ENCODE measurements at regions of chr14 and their contacts with region 1.

Region 1: GRCh38 chr14:68824517-68825347 is 31.9 kb upstream of the ZFP36L1 start:
- DNase-seq: peak; percentile 86
- H3K4me3 ChIP-seq: no peak overlapping the region
- H3K27ac ChIP-seq: no peak overlapping the region
- H3K4me1 ChIP-seq: peaks cover 0 to 5% of the 10 kb centered on the region in 2 experiments; a peak in 1 of 4 replicates
- H3K27me3 ChIP-seq: no peaks in the 10 kb centered on the region
- CTCF ChIP-seq: peak; percentile 82
- EP300 ChIP-seq: no peak
- RAD21 ChIP-seq: peak; percentile 66

Region 2: GRCh38 chr14:67943947-67944346 is 880.8 kb before region 1 on chr14:
- CTCF ChIA-PET with region 1: interaction called, 42 read pairs
- POLR2A ChIA-PET with region 1: no interaction called
- DNase-seq: peak; percentile 57
- H3K4me3 ChIP-seq: no peak overlapping the region
- H3K27ac ChIP-seq: peak overlapping the region; percentile 54 to 83; a peak in 3 of 4 replicates
- H3K4me1 ChIP-seq: peaks cover 0 to 28% of the 10 kb centered on the region in 2 experiments; a peak in 3 of 4 replicates
- H3K27me3 ChIP-seq: no peaks in the 10 kb centered on the region
- CTCF ChIP-seq: peak; percentile 82
- EP300 ChIP-seq: peak in 1 of 2 experiments; percentile 42; a peak in 1 of 4 replicates
- RAD21 ChIP-seq: peak; percentile 92

Region 3: DNA sequence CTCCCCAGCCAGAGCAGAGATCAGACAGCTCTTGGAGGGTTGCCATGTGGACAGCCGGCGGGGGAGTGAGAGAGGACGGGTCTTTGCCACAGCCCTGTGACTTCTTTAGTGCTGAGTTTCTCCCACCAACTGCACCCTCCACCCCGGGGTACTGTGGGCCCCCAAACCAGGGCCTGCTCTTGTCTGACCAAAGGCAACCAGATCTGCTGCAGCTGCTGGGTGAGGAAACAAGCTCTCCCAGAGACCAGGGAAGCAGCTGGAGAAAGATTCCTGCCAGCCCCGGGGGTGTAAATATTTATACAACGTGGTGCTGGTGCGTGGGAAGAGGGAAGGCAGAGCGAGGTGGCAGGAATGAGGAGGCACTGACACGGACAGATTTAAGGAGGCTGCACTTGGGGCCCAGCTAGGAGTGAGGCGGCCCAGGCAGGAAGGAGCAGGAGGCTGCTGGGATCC is 17.6 kb before region 1 on chr14:
- CTCF ChIA-PET with region 1: interaction called, 20 read pairs
- POLR2A ChIA-PET with region 1: no interaction called
- DNase-seq: peak; percentile 71
- H3K4me3 ChIP-seq: no peak overlapping the region
- H3K27ac ChIP-seq: peak overlapping the region; percentile 71 to 72
- H3K4me1 ChIP-seq: peaks cover 13% of the 10 kb centered on the region in 2 experiments; a peak in 3 of 4 replicates
- H3K27me3 ChIP-seq: no peaks in the 10 kb centered on the region
- CTCF ChIP-seq: no peak
- EP300 ChIP-seq: no peak
- RAD21 ChIP-seq: no peak

Region 4: GRCh38 chr14:68843471-68844209 is 18.9 kb after region 1 on chr14:
- CTCF ChIA-PET with region 1: interaction called, 21 read pairs
- POLR2A ChIA-PET with region 1: no interaction called
- DNase-seq: peak; percentile 77
- H3K4me3 ChIP-seq: peak overlapping the region in 1 of 2 experiments; percentile 23; a peak in 2 of 4 replicates
- H3K27ac ChIP-seq: no peak overlapping the region
- H3K4me1 ChIP-seq: peaks cover 0 to 4% of the 10 kb centered on the region in 2 experiments; a peak in 2 of 4 replicates
- H3K27me3 ChIP-seq: no peaks in the 10 kb centered on the region
- CTCF ChIP-seq: peak; percentile 94
- EP300 ChIP-seq: no peak
- RAD21 ChIP-seq: peak; percentile 71

Region 5: GRCh38 chr14:68884031-68885030 is 59.6 kb after region 1 on chr14:
- CTCF ChIA-PET with region 1: no interaction called
- POLR2A ChIA-PET with region 1: no interaction called
- DNase-seq: no peak
- H3K4me3 ChIP-seq: no peak overlapping the region
- H3K27ac ChIP-seq: peak overlapping the region; percentile 23 to 44; a peak in 3 of 4 replicates
- H3K4me1 ChIP-seq: peaks cover 4 to 12% of the 10 kb centered on the region in 2 experiments; a peak in 2 of 4 replicates
- H3K27me3 ChIP-seq: no peaks in the 10 kb centered on the region
- CTCF ChIP-seq: no peak
- EP300 ChIP-seq: no peak
- RAD21 ChIP-seq: no peak